Cardiac septum (tissue), 1 donor: ENCODE measurements at regions of chr1 and their contacts with region 1.

Region 1: DNA sequence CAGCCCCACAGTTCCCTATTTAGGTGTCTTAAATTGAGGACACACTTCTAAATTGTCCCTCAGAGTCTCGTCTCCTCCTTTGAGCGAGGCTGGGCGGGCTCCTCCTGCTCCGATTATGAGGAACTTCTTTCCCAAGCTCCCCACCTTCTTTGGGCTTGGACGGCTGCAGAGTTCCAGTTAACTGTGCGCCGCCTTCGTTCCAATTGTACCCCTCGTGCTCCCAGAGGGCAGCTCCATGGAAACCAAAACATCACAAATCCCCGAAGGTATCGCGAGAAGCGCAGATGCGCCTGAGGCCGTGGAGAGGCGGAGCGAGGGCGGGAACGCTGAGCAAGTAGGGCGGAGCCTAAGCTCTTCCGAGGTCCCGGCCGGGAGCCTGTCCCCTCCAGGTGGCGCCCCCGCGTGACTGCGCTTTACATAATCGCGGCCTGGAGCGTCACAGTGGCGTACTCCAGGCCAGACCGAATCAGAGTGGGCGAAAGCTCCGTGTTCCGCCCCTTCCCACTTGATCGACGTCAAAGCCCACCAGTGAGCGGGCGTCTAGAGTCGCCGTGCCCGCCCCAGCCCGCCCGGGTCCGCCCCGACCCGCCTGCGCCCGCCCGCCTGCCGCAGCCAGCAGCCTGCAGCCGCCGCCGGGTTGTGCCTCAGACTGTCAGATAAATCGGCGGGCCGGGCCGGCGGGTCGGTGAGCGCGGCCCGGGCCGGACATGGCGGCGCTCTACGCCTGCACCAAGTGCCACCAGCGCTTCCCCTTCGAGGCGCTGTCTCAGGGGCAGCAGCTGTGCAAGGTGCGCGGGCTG is at the start of gene FAM76A:
- DNase-seq: peak; percentile 100
- total RNA-seq, gene FAM76A: 11.5 TPM

Region 2: DNA sequence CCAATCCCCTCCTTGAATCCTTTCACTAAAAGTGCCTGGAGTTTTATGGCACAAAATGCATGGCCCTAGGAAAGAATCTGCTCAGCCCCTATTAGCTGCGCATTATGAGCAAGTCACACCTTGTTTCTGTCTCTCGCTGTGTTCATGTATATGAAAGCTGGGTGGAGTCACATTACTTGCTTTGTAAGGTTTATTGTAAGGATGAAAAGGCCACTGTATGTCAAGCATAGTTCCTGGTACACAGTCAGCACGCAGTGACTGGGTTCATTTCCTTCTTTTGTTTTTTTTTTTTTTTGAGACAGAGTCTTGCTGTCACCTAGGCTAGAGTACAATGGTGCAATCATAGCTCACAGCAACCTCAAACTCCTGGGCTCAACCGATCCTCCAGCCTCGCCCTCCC is 564.0 kb before region 1 on chr1:
- intact Hi-C with region 1: no loop called
- DNase-seq: no peak

Region 3: DNA sequence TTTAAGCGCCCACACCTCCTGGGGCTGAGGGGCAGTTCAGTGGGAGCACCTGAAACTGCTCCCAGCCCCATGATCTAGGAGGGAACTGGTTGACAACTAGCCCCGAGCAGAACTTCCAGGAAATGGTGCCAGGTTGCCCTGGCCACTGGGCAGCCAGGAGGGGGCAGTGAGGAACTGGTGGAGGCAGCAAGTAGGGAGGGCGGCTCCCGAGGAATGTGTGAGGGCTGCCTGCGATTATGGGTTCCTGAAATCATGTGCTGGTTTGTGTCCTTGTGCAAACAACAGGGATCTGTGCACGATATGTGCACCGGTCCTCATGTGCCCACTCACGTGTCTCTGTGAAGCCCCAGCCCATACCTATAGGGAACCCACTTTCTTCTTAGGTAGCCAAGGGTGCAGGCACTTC is 323.2 kb before region 1 on chr1:
- intact Hi-C with region 1: no loop called
- DNase-seq: peak; percentile 87

Region 4: GRCh38 chr1:27671964-27672749 is 53.4 kb before region 1 on chr1 and contains the start of gene IFI6:
- intact Hi-C with region 1: loop called (anchors 1 kb)
- DNase-seq: peak; percentile 94
- total RNA-seq, gene IFI6: 32.4 TPM

Region 5: DNA sequence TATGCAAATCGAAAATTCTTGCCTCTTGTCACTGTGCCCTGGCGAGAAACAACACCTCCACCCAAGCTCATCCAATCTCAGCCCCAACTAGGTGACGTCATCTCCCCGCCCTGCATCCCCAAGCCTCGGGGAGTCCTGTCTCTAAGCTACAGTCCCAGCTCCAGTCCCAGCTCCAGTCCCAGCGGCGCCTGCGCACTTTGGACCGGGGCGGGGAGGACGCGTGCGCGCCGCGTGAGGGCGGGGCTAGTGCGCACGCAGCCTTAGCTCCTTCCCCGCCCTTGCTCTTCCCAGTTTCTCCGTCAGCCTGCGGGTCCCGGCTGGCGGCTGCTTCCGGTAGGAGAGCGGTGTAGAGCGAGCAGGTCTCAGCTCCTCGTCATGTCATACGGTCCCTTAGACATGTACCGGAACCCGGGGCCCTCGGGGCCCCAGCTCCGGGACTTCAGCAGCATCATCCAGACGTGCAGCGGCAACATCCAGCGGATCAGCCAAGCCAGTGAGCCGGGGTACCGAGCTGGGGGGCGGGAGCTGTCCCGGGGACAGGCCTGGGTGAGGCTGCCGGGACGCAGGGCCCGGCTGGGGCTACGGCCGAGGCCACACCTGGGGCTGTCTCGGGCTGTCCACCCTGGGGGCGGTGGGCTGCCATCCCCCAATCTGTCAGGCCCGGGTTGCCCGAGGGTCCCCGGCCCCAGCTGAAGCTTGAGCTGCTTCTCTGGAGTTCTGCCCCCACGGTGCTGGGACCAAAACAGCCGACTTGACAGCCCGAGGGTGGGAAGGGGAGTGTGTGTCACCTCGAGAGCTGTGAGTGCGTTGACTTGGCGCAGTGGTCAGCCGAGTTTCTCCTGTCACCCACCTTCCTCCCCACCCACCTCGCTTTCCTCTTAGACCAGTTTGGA is 47.6 kb after region 1 on chr1 and contains the start of gene STX12:
- intact Hi-C with region 1: loop called (anchors 2 kb)
- DNase-seq: peak; percentile 98
- total RNA-seq, gene STX12: 27.4 TPM

Region 6: GRCh38 chr1:27830621-27831424 is 105.2 kb after region 1 on chr1 and contains the start of gene PPP1R8:
- intact Hi-C with region 1: loop called (anchors 2 kb)
- DNase-seq: peak; percentile 96
- total RNA-seq, gene PPP1R8: 23.8 TPM